CD14-positive monocyte (primary cell): ENCODE measurements at regions of chr4 and their contacts with region 1.

Region 1: GRCh38 chr4:73258686-73259570 is at the start of gene ANKRD17:
- DNase-seq: peak; percentile 91 to 96 (median 94)
- H3K4me3 ChIP-seq: peak within 1 kb of the TSS; percentile 76 to 87 (median 79)
- H3K4me3 Mint-ChIP-seq: peak within 1 kb of the TSS; percentile 98 to 99
- H3K27ac ChIP-seq: peak within 1 kb of the TSS; percentile 96 to 98
- H3K27ac Mint-ChIP-seq: peak within 1 kb of the TSS; percentile 98 to 99 (median 99)
- H3K4me1 ChIP-seq: peaks cover 20 to 30% of the 10 kb centered on the region in 2 donors
- H3K4me1 Mint-ChIP-seq: peaks cover 41% of the 10 kb centered on the region
- H3K27me3 ChIP-seq: no peaks in the 10 kb centered on the region
- H3K27me3 Mint-ChIP-seq: no peaks in the 10 kb centered on the region
- CTCF ChIP-seq: peak; percentile 36
- polyA plus RNA-seq, gene ANKRD17: 5.3 to 18.9 (median 9.0) TPM

Region 2: GRCh38 chr4:73069338-73070073 is 189.4 kb before region 1 on chr4 and contains the start of gene COX18:
- intact Hi-C with region 1: loop called (anchors 1 to 2 kb)
- DNase-seq: peak; percentile 99 to 100 (median 99)
- H3K4me3 ChIP-seq: peak within 1 kb of the TSS; percentile 76 to 94 (median 83)
- H3K4me3 Mint-ChIP-seq: peak within 1 kb of the TSS; percentile 84 to 96
- H3K27ac ChIP-seq: peak within 1 kb of the TSS; percentile 98 to 99
- H3K27ac Mint-ChIP-seq: peak within 1 kb of the TSS; percentile 93 to 99 (median 97)
- H3K4me1 ChIP-seq: peaks cover 8 to 10% of the 10 kb centered on the region in 2 donors
- H3K4me1 Mint-ChIP-seq: peaks cover 9% of the 10 kb centered on the region
- H3K27me3 ChIP-seq: no peaks in the 10 kb centered on the region
- H3K27me3 Mint-ChIP-seq: no peaks in the 10 kb centered on the region
- CTCF ChIP-seq: no peak
- polyA plus RNA-seq, gene COX18: 8.3 to 10.3 (median 9.7) TPM

Region 3: GRCh38 chr4:73222466-73223257 is 36.3 kb before region 1 on chr4:
- intact Hi-C with region 1: loop called (anchors 2 to 5 kb)
- DNase-seq: peak; percentile 79 to 90 (median 88)
- H3K4me3 ChIP-seq: peak overlapping the region; percentile 45 to 93 (median 82)
- H3K4me3 Mint-ChIP-seq: no peak overlapping the region
- H3K27ac ChIP-seq: peak overlapping the region in 1 of 2 donors; percentile 89
- H3K27ac Mint-ChIP-seq: no peak overlapping the region
- H3K4me1 ChIP-seq: peaks cover 6 to 10% of the 10 kb centered on the region in 2 donors
- H3K4me1 Mint-ChIP-seq: peaks cover 7% of the 10 kb centered on the region
- H3K27me3 ChIP-seq: no peaks in the 10 kb centered on the region
- H3K27me3 Mint-ChIP-seq: no peaks in the 10 kb centered on the region
- CTCF ChIP-seq: no peak